ENCODE measurements at regions of chr5 and their contacts with region 1.

Region 1: GRCh38 chr5:42908509-42909488 is 97.1 kb upstream of the SELENOP start:
- DNase-seq: peak; percentile 93
- H3K4me3 Mint-ChIP-seq: peak overlapping the region; percentile 82
- H3K27ac Mint-ChIP-seq: peak overlapping the region; percentile 70
- H3K4me1 Mint-ChIP-seq: peaks cover 10% of the 10 kb centered on the region
- H3K27me3 Mint-ChIP-seq: peaks cover 10% of the 10 kb centered on the region

Region 2: DNA sequence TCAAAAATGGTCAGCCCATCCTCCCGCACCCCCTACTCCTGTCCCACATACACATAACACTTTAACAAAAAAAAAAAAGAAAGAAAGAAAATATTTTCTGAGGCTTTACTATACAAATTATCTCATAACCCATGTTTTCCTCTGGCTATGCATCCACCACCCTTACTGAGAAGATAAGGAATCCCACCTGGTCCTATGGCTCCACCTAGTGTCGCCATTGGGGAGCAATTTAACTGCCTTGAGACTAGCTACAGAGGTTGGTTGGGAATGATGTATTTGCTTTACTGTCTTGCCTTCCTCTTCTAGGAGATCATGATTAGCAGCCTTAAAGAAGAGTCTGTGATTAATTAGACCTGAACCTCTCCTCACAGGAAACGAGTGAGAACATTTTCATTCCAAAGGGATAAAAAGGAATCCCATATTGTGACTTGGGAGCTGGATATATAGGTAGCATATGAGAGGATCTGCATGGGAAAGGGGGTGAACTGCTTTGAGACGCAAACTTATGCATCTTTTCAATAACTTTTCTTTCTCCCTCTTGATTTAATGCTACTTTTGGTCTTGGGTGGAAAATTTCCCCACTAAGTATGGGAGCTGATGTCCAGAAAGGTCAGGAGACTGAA is 19.4 kb before region 1 on chr5:
- CTCF ChIA-PET with region 1: interaction called, 16 read pairs
- POLR2A ChIA-PET with region 1: no interaction called
- intact Hi-C with region 1: no loop called
- DNase-seq: peak; percentile 77
- H3K4me3 Mint-ChIP-seq: no peak overlapping the region
- H3K27ac Mint-ChIP-seq: no peak overlapping the region
- H3K4me1 Mint-ChIP-seq: no peaks in the 10 kb centered on the region
- H3K27me3 Mint-ChIP-seq: peaks cover 2% of the 10 kb centered on the region

Region 3: DNA sequence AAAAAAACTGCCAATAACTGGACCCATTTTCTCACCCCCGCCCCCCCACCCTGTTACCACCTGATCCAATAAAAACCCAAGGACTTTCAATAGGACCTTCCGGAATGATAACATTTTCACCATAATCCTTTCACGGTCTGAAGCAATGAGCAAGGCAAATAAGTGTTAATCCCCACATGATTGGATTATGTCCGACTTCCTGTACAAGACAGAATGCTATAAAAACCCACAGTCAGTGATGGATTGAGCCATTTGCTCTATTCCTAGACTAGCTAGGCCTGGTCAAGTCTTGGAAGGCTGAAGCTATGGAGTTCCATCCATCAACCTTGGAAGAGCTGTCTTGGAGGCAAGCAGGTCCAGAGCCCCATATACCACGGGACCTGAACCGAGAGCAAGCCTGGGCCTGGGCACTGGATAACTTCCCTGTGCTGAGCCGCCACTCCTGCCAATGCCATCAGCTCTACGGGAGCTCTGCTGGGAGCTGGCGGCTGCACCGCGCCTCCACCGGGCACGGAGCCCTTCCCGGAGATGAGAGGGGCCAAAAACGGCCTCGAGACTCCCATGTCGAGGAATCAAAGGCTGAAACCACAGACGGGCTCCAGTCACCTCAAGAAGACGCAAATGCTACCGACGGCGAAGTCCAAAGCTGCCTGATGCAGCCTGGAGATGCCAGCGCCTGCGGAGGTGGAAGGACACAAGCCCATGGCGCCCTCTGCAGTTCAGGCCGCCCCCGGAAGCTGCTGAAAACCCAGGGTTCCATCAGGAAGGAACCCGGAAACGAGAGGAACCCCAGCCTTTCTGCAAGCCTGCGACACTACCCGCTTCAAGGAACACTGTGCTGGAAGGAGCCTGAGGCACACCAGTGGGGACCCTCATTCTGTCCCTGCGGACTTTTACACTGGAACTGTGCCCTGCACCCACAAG is 62.1 kb after region 1 on chr5:
- CTCF ChIA-PET with region 1: interaction called, 11 read pairs
- POLR2A ChIA-PET with region 1: no interaction called
- intact Hi-C with region 1: no loop called
- DNase-seq: peak; percentile 30
- H3K4me3 Mint-ChIP-seq: no peak overlapping the region
- H3K27ac Mint-ChIP-seq: no peak overlapping the region
- H3K4me1 Mint-ChIP-seq: peaks cover 8% of the 10 kb centered on the region
- H3K27me3 Mint-ChIP-seq: no peaks in the 10 kb centered on the region

Region 4: DNA sequence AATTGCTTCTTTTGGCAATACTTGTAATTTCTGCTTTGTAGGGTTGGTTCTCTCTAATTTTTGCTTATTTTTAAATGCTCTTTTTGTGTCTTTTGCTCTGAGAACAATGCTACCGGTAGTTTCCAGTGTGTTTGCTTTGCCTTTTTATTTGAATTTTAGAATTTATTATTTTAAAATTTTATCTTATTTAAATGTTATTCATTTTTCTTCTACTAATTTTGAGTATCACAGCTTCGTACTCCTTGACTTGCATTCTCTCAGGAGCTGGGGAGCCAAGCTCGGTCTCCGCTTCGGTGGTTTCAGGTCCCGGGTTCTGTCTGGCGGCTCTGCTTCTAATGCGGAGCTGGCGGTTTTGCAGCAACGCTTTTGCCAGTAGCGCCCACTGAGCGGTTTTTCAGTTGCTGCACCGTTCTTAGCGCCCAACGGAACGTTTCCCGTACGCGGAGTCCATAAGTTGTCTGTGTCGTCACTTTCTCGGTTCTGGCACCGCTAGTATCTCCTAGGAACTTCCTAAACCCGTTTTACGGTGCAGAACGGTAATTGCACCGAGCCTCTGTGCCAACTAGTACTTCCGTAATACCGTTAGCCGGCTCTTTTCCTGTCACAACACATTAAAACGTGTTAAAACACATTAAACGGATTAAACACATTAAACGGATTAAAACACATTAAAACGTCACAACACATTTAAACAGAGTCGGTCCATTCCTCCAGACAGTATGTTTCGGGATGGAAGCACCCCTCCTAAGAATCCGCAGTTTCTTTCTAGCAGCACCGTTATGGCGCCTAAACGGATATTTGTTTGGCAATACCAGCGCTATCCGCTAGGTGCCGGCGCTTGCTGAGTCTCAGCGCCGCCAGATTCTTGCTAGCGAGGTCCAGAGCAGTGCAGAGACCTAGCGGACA is 85.7 kb after region 1 on chr5:
- CTCF ChIA-PET with region 1: interaction called, 33 read pairs
- POLR2A ChIA-PET with region 1: interaction called, 5 read pairs
- intact Hi-C with region 1: loop called (anchors 1 kb)
- DNase-seq: peak; percentile 93
- H3K4me3 Mint-ChIP-seq: peak overlapping the region; percentile 87
- H3K27ac Mint-ChIP-seq: peak overlapping the region; percentile 94
- H3K4me1 Mint-ChIP-seq: peaks cover 25% of the 10 kb centered on the region
- H3K27me3 Mint-ChIP-seq: no peaks in the 10 kb centered on the region

Region 5: GRCh38 chr5:43019614-43020293 is 111.0 kb after region 1 on chr5:
- CTCF ChIA-PET with region 1: interaction called, 49 read pairs
- POLR2A ChIA-PET with region 1: interaction called, 9 read pairs
- intact Hi-C with region 1: loop called (anchors 1 kb)
- DNase-seq: peak; percentile 91
- H3K4me3 Mint-ChIP-seq: peak overlapping the region; percentile 97
- H3K27ac Mint-ChIP-seq: peak overlapping the region; percentile 98
- H3K4me1 Mint-ChIP-seq: peaks cover 32% of the 10 kb centered on the region
- H3K27me3 Mint-ChIP-seq: no peaks in the 10 kb centered on the region

Region 6: GRCh38 chr5:43215073-43215631 is 306.4 kb after region 1 on chr5:
- CTCF ChIA-PET with region 1: no interaction called
- POLR2A ChIA-PET with region 1: no interaction called
- intact Hi-C with region 1: no loop called
- DNase-seq: no peak
- H3K4me3 Mint-ChIP-seq: no peak overlapping the region
- H3K27ac Mint-ChIP-seq: no peak overlapping the region
- H3K4me1 Mint-ChIP-seq: no peaks in the 10 kb centered on the region
- H3K27me3 Mint-ChIP-seq: peaks cover 10% of the 10 kb centered on the region

Region 7: GRCh38 chr5:43389679-43390329 is 481.0 kb after region 1 on chr5:
- CTCF ChIA-PET with region 1: interaction called, 21 read pairs
- POLR2A ChIA-PET with region 1: no interaction called
- intact Hi-C with region 1: loop called (anchors 5 kb)
- DNase-seq: peak; percentile 58
- H3K4me3 Mint-ChIP-seq: no peak overlapping the region
- H3K27ac Mint-ChIP-seq: no peak overlapping the region
- H3K4me1 Mint-ChIP-seq: peaks cover 31% of the 10 kb centered on the region
- H3K27me3 Mint-ChIP-seq: no peaks in the 10 kb centered on the region

Measured in activated CD4-positive, alpha-beta memory T cell treated with anti-CD3 and anti-CD28 coated beads for 36 hours (primary cell).